Activated CD4-positive, alpha-beta T cell treated with anti-CD3 and anti-CD28 coated beads, Interleukin-2, amount 10 ng/mL, durations not matched to agents 24 days and 14 days (primary cell): ENCODE measurements at regions of chr5 and their contacts with region 1.

Region 1: GRCh38 chr5:168747987-168748777 is 169.0 kb upstream of the PANK3 start:
- DNase-seq: peak; percentile 80
- H3K4me3 Mint-ChIP-seq: no peak overlapping the region
- H3K27ac Mint-ChIP-seq: peak overlapping the region; percentile 73
- H3K4me1 Mint-ChIP-seq: peaks cover 6% of the 10 kb centered on the region
- H3K27me3 Mint-ChIP-seq: no peaks in the 10 kb centered on the region

Region 2: GRCh38 chr5:168654211-168654721 is 93.9 kb before region 1 on chr5:
- intact Hi-C with region 1: no loop called
- DNase-seq: no peak
- H3K4me3 Mint-ChIP-seq: no peak overlapping the region
- H3K27ac Mint-ChIP-seq: no peak overlapping the region
- H3K4me1 Mint-ChIP-seq: no peaks in the 10 kb centered on the region
- H3K27me3 Mint-ChIP-seq: peaks cover 2% of the 10 kb centered on the region

Region 3: GRCh38 chr5:168720575-168720974 is 27.6 kb before region 1 on chr5:
- intact Hi-C with region 1: no loop called
- DNase-seq: no peak
- H3K4me3 Mint-ChIP-seq: no peak overlapping the region
- H3K27ac Mint-ChIP-seq: no peak overlapping the region
- H3K4me1 Mint-ChIP-seq: no peaks in the 10 kb centered on the region
- H3K27me3 Mint-ChIP-seq: no peaks in the 10 kb centered on the region

Region 4: GRCh38 chr5:168802337-168802736 is 54.2 kb after region 1 on chr5:
- intact Hi-C with region 1: loop called (anchors 5 kb)
- DNase-seq: peak; percentile 62
- H3K4me3 Mint-ChIP-seq: peak overlapping the region; percentile 66
- H3K27ac Mint-ChIP-seq: peak overlapping the region; percentile 94
- H3K4me1 Mint-ChIP-seq: peaks cover 25% of the 10 kb centered on the region
- H3K27me3 Mint-ChIP-seq: no peaks in the 10 kb centered on the region

Region 5: DNA sequence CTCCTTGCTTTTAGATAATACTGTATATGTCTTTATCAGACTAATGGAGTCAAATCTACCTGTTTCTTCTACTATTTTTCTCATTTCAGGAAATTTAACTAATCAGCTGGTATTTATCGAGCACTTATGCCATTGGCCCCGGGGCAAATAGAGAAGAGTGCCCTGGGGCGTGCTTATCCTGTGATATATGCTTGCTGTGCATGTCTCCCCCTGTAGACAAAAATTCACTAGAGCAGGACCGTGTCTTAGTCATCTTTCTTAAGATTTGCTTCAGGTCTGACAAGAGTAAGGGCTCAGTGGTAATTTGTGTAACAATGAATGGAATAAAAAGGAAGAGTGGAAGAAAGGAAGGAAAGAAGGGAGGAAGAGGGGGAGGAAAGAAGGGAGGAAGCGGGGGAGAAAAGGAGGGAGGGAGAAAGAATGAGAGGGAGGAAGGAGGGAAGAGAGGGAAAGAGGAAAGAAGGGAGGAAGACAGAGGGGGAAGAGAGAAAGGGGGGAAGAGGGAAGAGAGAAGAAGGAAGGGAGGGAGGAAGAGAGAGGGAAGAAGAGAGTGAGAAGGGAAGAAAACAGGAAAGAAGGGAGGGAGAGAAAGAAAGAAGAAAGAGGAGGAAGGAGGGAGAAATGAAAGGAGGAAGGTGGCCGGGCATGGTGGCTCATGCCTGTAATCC is 126.7 kb after region 1 on chr5:
- intact Hi-C with region 1: loop called (anchors 5 kb)
- DNase-seq: no peak
- H3K4me3 Mint-ChIP-seq: no peak overlapping the region
- H3K27ac Mint-ChIP-seq: no peak overlapping the region
- H3K4me1 Mint-ChIP-seq: peaks cover 3% of the 10 kb centered on the region
- H3K27me3 Mint-ChIP-seq: peaks cover 18% of the 10 kb centered on the region

Region 6: DNA sequence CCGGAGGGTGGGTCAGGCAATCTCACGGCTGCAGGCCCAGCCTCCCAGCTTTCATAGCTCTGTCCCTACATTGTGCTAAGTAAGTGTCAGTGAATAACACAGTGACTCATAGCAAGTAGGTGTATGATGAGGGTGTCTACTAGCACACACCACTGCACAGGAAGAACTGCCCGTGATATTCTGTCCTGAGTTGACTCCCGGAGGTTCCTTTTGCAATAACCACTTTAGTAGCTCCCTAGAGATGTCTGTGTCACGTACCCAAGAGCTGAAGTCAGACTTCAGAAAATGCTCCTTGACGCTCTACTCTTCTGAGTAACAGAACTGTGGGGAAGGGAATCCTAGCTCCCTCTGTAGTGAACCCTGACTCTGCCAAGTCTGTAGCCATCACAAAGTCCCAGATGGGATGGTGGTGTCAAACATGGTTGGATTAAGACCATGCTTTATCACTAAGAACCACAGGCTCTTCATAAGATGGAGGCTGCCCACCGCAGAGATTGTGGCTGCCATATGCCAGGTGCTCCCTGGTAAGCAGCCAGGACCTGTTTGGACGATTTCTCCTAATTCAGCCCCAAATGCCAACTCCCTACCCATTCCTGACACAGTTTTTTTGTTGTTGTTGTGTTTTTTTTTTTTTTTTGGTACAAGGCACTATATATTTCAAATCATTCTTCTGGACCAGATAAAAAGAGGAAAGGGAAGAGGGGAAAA is 183.6 kb after region 1 on chr5:
- intact Hi-C with region 1: loop called (anchors 2 kb)
- DNase-seq: no peak
- H3K4me3 Mint-ChIP-seq: no peak overlapping the region
- H3K27ac Mint-ChIP-seq: no peak overlapping the region
- H3K4me1 Mint-ChIP-seq: peaks cover 8% of the 10 kb centered on the region
- H3K27me3 Mint-ChIP-seq: peaks cover 2% of the 10 kb centered on the region

Region 7: DNA sequence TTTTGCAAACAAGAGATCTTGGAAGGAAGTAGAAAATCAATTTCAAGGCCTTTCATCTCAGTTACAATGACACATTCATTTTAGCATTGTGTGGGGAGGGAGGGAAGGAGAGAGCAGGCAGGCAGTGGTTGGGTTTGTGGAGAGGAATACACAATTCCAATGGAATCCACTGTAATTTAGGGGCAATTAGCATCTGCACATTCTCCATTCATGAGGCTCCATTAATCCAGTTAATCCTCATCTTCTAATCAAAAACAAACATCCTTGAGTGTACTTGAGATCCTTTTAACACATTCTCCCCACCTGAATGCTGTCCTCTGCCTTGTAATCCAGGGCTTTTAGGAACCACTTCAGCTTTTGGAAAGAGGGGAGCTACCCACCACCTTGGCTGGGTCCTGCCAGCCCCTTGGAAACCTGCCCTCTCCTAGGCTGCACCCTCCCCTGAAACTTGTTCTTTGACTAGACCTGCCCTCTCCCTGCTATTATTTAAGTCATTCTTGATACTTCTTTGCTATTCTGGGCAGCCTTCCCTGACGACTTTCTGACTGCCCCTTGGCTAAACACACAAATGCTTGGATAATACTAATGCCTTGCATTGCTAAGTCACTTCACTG is 281.6 kb after region 1 on chr5:
- intact Hi-C with region 1: no loop called
- DNase-seq: no peak
- H3K4me3 Mint-ChIP-seq: no peak overlapping the region
- H3K27ac Mint-ChIP-seq: no peak overlapping the region
- H3K4me1 Mint-ChIP-seq: no peaks in the 10 kb centered on the region
- H3K27me3 Mint-ChIP-seq: peaks cover 14% of the 10 kb centered on the region